ENCODE measurements at regions of chr5 and their contacts with region 1.

Region 1: DNA sequence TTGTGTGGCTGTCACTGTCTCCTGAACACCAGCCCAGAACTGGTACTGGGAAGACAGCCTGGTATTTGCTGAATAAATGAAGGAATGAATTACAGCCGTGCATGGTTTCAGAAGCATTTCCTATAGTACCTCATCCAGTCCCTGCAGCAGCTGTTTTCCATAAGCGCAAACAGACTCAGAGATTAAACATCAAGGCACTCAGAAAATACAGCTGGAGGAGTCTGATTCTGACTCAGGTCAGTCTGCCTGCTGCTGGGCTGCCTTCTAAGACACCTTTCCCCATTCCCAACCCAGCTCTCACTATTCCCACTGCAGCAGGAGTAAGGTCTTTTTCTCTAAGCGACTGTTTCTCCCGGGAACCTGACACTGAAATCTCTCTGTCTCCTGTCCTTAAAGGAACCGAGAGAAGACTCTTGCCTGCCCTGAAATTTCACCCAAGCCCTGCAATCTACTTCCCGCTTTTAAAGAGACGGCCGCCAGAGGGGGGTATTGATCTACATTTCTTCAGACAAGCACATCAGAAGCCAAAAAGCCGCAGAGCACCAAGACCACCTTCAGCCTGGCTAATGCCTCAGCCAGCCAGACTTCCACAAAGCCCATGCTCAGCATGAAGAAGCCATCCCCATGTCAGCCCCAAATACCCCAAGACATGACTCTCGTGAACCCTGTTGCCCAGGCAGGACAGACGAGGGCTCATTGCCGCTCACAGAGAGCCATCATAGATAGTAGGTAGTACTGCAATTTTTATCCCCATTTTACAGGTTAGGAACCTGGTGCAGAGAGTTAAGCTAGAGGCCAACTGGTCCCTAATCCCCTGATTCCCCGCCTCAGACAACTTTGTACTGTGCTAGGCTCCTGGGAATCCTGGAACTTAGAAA is 5.4 kb upstream of the FOXI1 start:
- DNase-seq: peak; percentile 77
- H3K4me3 ChIP-seq: no peak overlapping the region
- H3K27ac ChIP-seq: no peak overlapping the region
- H3K4me1 ChIP-seq: no peaks in the 10 kb centered on the region
- H3K27me3 ChIP-seq: no peaks in the 10 kb centered on the region
- CTCF ChIP-seq: peak; percentile 25 to 72 (median 64)
- POLR2A ChIP-seq: no peak

Region 2: GRCh38 chr5:170183816-170184687 is 83.7 kb after region 1 on chr5:
- intact Hi-C with region 1: loop called (anchors 5 kb)
- DNase-seq: peak; percentile 50
- H3K4me3 ChIP-seq: no peak overlapping the region
- H3K27ac ChIP-seq: no peak overlapping the region
- H3K4me1 ChIP-seq: no peaks in the 10 kb centered on the region
- H3K27me3 ChIP-seq: no peaks in the 10 kb centered on the region
- CTCF ChIP-seq: peak; percentile 25 to 80 (median 68)
- POLR2A ChIP-seq: no peak

Region 3: GRCh38 chr5:170420780-170421412 is 320.6 kb after region 1 on chr5:
- intact Hi-C with region 1: loop called (anchors 10 kb)
- DNase-seq: peak; percentile 63
- H3K4me3 ChIP-seq: no peak overlapping the region
- H3K27ac ChIP-seq: no peak overlapping the region
- H3K4me1 ChIP-seq: no peaks in the 10 kb centered on the region
- H3K27me3 ChIP-seq: peaks cover 2% of the 10 kb centered on the region
- CTCF ChIP-seq: peak; percentile 68 to 82 (median 70)
- POLR2A ChIP-seq: no peak

Region 4: GRCh38 chr5:170638454-170639220 is 538.3 kb after region 1 on chr5:
- intact Hi-C with region 1: loop called (anchors 10 kb)
- DNase-seq: peak; percentile 47
- H3K4me3 ChIP-seq: no peak overlapping the region
- H3K27ac ChIP-seq: no peak overlapping the region
- H3K4me1 ChIP-seq: no peaks in the 10 kb centered on the region
- H3K27me3 ChIP-seq: no peaks in the 10 kb centered on the region
- CTCF ChIP-seq: peak; percentile 51 to 82 (median 60)
- POLR2A ChIP-seq: no peak